ENCODE measurements at regions of chr9 and their contacts with region 1.

Region 1: GRCh38 chr9:70120834-70121510 is 77.3 kb downstream of the MAMDC2 start:
- DNase-seq: peak; percentile 85
- H3K4me3 ChIP-seq: no peak overlapping the region
- H3K27ac ChIP-seq: peak overlapping the region; percentile 34
- H3K27me3 ChIP-seq: no peaks in the 10 kb centered on the region
- CTCF ChIP-seq: peak; percentile 55

Region 2: GRCh38 chr9:70229579-70229978 is 108.6 kb after region 1 on chr9:
- CTCF ChIA-PET with region 1: interaction called, 24 read pairs
- POLR2A ChIA-PET with region 1: no interaction called
- DNase-seq: no peak
- H3K4me3 ChIP-seq: no peak overlapping the region
- H3K27ac ChIP-seq: no peak overlapping the region
- H3K27me3 ChIP-seq: no peaks in the 10 kb centered on the region
- CTCF ChIP-seq: peak; percentile 44

Measured in AG04450 (cell line).